Aorta (tissue), 5 donors: ENCODE measurements at regions of chr11 and their contacts with region 1.

Region 1: DNA sequence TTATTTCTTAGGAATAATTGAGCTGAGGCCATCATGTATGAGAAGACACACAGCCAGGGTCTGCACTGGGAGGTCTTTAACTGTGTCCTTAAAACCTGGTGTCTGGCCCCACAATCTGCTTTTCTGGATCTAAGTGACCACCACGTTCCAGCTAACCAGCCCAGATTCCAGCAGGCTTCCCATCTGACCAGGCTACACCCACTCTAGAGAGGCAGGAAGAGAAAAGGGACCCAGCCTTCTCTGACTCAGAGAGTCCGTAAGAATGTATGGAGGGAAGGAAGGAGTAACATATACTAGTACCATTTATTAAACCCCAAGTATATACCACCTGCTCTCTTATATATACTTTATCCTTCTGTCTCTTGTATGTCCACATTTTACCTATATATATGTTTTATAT is 80.1 kb downstream of the LDLRAD3 start:
- DNase-seq: no peak
- ATAC-seq: no peak
- H3K4me3 ChIP-seq: no peak overlapping the region
- H3K27ac ChIP-seq: no peak overlapping the region
- H3K4me1 ChIP-seq: no peaks in the 10 kb centered on the region
- H3K27me3 ChIP-seq: no peaks in the 10 kb centered on the region

Region 2: GRCh38 chr11:36073411-36074203 is 49.7 kb after region 1 on chr11:
- intact Hi-C with region 1: no loop called
- DNase-seq: peak in 1 of 2 donors; percentile 59
- ATAC-seq: peak; percentile 50
- H3K4me3 ChIP-seq: no peak overlapping the region
- H3K27ac ChIP-seq: no peak overlapping the region
- H3K4me1 ChIP-seq: no peaks in the 10 kb centered on the region
- H3K27me3 ChIP-seq: no peaks in the 10 kb centered on the region

Region 3: DNA sequence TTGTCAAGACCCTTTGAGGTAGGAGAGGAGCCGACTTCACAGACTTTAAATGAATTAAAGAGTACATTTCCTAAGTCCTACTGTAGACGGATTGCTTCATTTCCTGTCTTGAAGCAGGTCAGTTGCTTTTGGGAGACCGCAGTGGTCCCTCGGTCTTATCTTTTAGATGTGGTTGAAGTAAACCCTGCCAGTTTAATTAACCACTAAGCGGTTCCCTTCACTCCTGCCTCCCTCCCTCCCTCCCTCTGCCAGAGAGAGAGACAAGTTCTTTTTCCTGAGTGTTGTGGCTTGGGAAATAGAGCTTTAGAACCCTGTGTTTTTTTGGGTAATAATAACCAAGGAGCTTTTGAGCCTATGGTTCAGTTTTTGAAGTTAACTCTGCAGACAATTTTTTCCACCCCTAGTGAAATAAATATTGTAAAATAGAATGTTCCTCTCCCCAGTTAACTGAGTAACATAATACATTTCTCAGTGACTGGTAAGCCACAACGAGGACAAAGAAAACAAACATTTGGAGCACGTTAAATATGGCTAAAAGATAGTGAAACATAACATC is 67.4 kb after region 1 on chr11:
- intact Hi-C with region 1: loop called in 1 of 2 experiments (anchors 2 kb)
- DNase-seq: no peak
- ATAC-seq: no peak
- H3K4me3 ChIP-seq: no peak overlapping the region
- H3K27ac ChIP-seq: no peak overlapping the region
- H3K4me1 ChIP-seq: peaks cover 4 to 7% of the 10 kb centered on the region in 2 donors
- H3K27me3 ChIP-seq: no peaks in the 10 kb centered on the region

Region 4: GRCh38 chr11:36156161-36156816 is 132.4 kb after region 1 on chr11:
- intact Hi-C with region 1: no loop called
- DNase-seq: no peak
- ATAC-seq: no peak
- H3K4me3 ChIP-seq: no peak overlapping the region
- H3K27ac ChIP-seq: no peak overlapping the region
- H3K4me1 ChIP-seq: no peaks in the 10 kb centered on the region
- H3K27me3 ChIP-seq: no peaks in the 10 kb centered on the region

Region 5: GRCh38 chr11:36235750-36236149 is 211.8 kb after region 1 on chr11:
- intact Hi-C with region 1: no loop called
- DNase-seq: no peak
- ATAC-seq: no peak
- H3K4me3 ChIP-seq: no peak overlapping the region
- H3K27ac ChIP-seq: no peak overlapping the region
- H3K4me1 ChIP-seq: peaks cover 0 to under 1% of the 10 kb centered on the region in 2 donors
- H3K27me3 ChIP-seq: no peaks in the 10 kb centered on the region